Colonic mucosa (tissue), 4 donors: ENCODE measurements at regions of chr15 and their contacts with region 1.

Region 1: DNA sequence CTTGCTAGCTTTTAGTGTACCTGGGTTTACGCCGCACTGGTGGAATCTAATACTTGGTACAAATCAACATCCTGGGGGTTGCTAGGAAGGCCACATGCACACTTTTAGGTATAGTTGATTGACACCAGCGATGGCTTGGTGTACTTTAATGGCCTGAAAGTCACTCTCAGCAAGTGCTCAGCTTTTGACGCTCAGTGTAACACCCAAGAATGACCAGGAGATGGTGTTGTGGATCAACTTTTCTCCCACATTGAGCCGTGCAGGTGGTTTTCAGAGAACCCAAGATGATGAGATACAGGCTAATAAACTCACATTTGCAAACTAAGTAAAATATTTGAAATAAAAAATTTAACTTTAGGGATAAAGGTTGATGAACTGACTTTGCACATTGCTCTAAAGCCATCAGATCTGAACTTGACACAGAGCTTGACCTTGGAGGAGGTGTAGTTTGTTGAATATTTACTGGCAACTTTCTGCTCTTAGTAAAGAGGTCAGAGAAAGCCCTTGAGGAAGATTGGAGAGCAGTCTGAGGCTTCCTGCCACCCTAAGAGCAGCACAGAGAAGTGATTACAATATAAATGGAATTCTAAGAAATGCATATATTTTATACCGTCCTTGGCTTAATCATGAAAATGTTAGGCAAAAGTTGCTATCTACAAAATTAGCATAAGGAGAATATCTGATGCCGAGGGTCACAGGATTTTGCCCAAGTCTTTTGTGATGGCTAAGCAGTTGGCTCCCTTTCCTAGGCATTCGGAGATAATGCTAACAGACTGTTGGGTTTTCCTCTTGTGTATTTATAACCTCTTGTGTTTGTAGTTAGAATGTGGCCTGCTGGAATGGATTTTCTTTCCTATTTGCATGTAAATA is 143.4 kb upstream of the RASGRP1 start:
- DNase-seq: peak; percentile 55
- H3K4me3 ChIP-seq: no peak overlapping the region
- H3K27ac ChIP-seq: no peak overlapping the region
- H3K4me1 ChIP-seq: peaks cover 4% of the 10 kb centered on the region
- H3K27me3 ChIP-seq: no peaks in the 10 kb centered on the region
- CTCF ChIP-seq: peak; percentile 67

Region 2: GRCh38 chr15:38576837-38577236 is 131.2 kb before region 1 on chr15:
- intact Hi-C with region 1: no loop called
- DNase-seq: no peak
- H3K4me3 ChIP-seq: no peak overlapping the region
- H3K27ac ChIP-seq: no peak overlapping the region
- H3K4me1 ChIP-seq: no peaks in the 10 kb centered on the region
- H3K27me3 ChIP-seq: no peaks in the 10 kb centered on the region
- CTCF ChIP-seq: no peak

Region 3: DNA sequence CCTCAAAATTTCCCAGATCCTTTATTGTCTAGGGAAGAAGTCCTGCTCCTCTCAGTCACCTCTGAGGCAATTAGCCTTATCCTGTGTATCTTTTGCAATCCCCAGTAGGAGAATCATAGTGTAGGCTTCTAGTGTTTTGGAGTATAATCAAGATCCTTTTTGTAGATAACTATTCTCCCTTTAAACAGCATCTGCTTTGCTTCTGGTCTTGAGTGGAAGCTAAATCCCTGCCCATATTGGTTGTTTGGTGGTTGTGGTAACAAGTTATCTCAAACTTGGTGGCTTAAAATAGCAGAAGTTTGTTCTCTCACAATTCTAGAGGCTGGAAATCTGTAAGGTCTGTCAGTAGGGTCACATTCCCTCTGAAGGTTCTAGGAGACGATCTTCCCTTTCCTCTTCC is 74.1 kb after region 1 on chr15:
- intact Hi-C with region 1: no loop called
- DNase-seq: no peak
- H3K4me3 ChIP-seq: no peak overlapping the region
- H3K27ac ChIP-seq: no peak overlapping the region
- H3K4me1 ChIP-seq: no peaks in the 10 kb centered on the region
- H3K27me3 ChIP-seq: no peaks in the 10 kb centered on the region
- CTCF ChIP-seq: no peak

Region 4: GRCh38 chr15:38817427-38818156 is 109.6 kb after region 1 on chr15:
- intact Hi-C with region 1: loop called (anchors 5 kb)
- DNase-seq: peak; percentile 93
- H3K4me3 ChIP-seq: no peak overlapping the region
- H3K27ac ChIP-seq: no peak overlapping the region
- H3K4me1 ChIP-seq: no peaks in the 10 kb centered on the region
- H3K27me3 ChIP-seq: no peaks in the 10 kb centered on the region
- CTCF ChIP-seq: peak; percentile 98

Region 5: GRCh38 chr15:38828031-38828532 is 120.0 kb after region 1 on chr15:
- intact Hi-C with region 1: no loop called
- DNase-seq: no peak
- H3K4me3 ChIP-seq: no peak overlapping the region
- H3K27ac ChIP-seq: no peak overlapping the region
- H3K4me1 ChIP-seq: no peaks in the 10 kb centered on the region
- H3K27me3 ChIP-seq: no peaks in the 10 kb centered on the region
- CTCF ChIP-seq: no peak